ENCODE measurements at regions of chr13 and their contacts with region 1.

Region 1: DNA sequence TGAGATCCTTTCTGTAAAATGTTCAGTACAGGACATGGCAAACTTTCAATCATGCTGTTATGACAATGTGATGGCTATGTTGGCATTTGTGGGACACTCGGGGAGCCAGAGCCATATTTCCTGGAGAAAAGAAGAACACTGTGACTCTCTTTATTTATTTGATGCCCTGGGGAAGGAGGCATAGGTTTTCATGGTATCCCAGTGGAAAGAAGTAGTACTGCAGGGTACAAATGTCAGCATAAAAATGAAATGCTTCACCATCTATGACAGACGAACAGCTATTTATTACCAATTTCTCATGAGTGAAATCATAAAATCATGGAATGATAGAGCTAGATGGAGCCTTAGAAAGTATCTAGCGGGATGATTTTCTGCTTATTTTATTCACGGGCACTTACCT is 217.1 kb downstream of the COL4A1 start:
- DNase-seq: no peak
- H3K4me3 ChIP-seq: no peak overlapping the region
- H3K27ac ChIP-seq: no peak overlapping the region
- H3K4me1 ChIP-seq: no peaks in the 10 kb centered on the region; a peak in 1 of 7 replicates
- H3K27me3 ChIP-seq: no peaks in the 10 kb centered on the region
- CTCF ChIP-seq: peak in 1 of 3 experiments; percentile 49; a peak in 1 of 4 replicates
- EP300 ChIP-seq: no peak
- POLR2A ChIP-seq: no peak
- RAD21 ChIP-seq: peak in 1 of 2 experiments; percentile 22; a peak in 1 of 4 replicates

Region 2: GRCh38 chr13:110073982-110074381 is 15.8 kb before region 1 on chr13:
- CTCF ChIA-PET with region 1: interaction called, 15 read pairs
- POLR2A ChIA-PET with region 1: no interaction called
- DNase-seq: no peak
- H3K4me3 ChIP-seq: no peak overlapping the region
- H3K27ac ChIP-seq: no peak overlapping the region
- H3K4me1 ChIP-seq: no peaks in the 10 kb centered on the region; a peak in 2 of 7 replicates
- H3K27me3 ChIP-seq: no peaks in the 10 kb centered on the region
- CTCF ChIP-seq: peak; percentile 2 to 33 (median 30); a peak in 3 of 4 replicates
- EP300 ChIP-seq: no peak
- POLR2A ChIP-seq: no peak
- RAD21 ChIP-seq: peak; percentile 26 to 49; a peak in 3 of 4 replicates

Region 3: GRCh38 chr13:110103534-110103933 is 13.7 kb after region 1 on chr13:
- CTCF ChIA-PET with region 1: interaction called, 32 read pairs
- POLR2A ChIA-PET with region 1: no interaction called
- DNase-seq: no peak
- H3K4me3 ChIP-seq: no peak overlapping the region
- H3K27ac ChIP-seq: no peak overlapping the region
- H3K4me1 ChIP-seq: peaks cover 0 to 3% (median 0%) of the 10 kb centered on the region in 4 experiments; a peak in 2 of 7 replicates
- H3K27me3 ChIP-seq: no peaks in the 10 kb centered on the region
- CTCF ChIP-seq: no peak
- EP300 ChIP-seq: no peak
- POLR2A ChIP-seq: no peak
- RAD21 ChIP-seq: no peak

Region 4: GRCh38 chr13:110150384-110151101 is 60.7 kb after region 1 on chr13:
- CTCF ChIA-PET with region 1: no interaction called
- POLR2A ChIA-PET with region 1: no interaction called
- DNase-seq: no peak
- H3K4me3 ChIP-seq: no peak overlapping the region
- H3K27ac ChIP-seq: no peak overlapping the region
- H3K4me1 ChIP-seq: peaks cover 0 to 2% (median 0%) of the 10 kb centered on the region in 4 experiments; a peak in 3 of 7 replicates
- H3K27me3 ChIP-seq: no peaks in the 10 kb centered on the region
- CTCF ChIP-seq: no peak
- EP300 ChIP-seq: no peak
- POLR2A ChIP-seq: no peak
- RAD21 ChIP-seq: no peak